ENCODE measurements at regions of chr16 and their contacts with region 1.

Region 1: GRCh38 chr16:83344014-83344413 is 463.8 kb upstream of the HSBP1 start:
- DNase-seq: no peak
- H3K4me3 ChIP-seq: no peak overlapping the region; a peak in 1 of 4 replicates
- H3K27ac ChIP-seq: peak overlapping the region; percentile 22 to 93; a peak in 3 of 4 replicates
- H3K4me1 ChIP-seq: no peaks in the 10 kb centered on the region; a peak in 1 of 4 replicates
- H3K27me3 ChIP-seq: no peaks in the 10 kb centered on the region
- CTCF ChIP-seq: no peak
- EP300 ChIP-seq: peak in 1 of 2 experiments; percentile 61; a peak in 1 of 4 replicates
- RAD21 ChIP-seq: no peak

Region 2: DNA sequence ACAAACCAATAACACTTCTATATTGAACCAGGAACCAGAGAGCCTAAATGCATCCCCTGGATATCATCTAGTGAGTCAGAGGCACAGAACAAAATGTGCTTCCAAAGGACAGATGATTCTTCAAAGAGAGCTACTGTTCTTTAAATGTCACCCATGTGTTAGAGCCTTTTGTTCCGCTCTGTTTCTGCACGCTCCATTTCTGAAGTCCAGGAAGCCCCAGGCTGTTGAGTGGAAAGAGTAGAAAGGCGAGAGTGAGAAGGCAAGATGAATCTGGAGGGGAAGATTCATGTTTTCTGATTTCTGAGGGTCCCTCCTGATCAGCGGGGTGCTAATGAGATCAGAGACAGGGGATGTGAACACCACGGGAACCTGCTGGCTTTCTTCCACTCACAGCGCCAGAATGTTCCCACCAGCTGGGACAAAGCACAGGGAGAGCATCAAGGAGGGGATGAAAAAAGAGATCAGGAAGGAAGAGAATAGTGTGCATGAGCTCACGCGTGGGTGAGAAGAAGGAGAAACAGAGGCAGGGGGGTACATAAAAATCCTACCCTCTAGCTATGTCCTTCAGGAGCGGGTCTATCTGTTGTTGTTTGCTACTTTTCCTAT is 96.1 kb before region 1 on chr16:
- CTCF ChIA-PET with region 1: no interaction called
- POLR2A ChIA-PET with region 1: no interaction called
- DNase-seq: no peak
- H3K4me3 ChIP-seq: no peak overlapping the region
- H3K27ac ChIP-seq: no peak overlapping the region
- H3K4me1 ChIP-seq: no peaks in the 10 kb centered on the region
- H3K27me3 ChIP-seq: no peaks in the 10 kb centered on the region
- CTCF ChIP-seq: no peak
- EP300 ChIP-seq: no peak
- RAD21 ChIP-seq: no peak

Region 3: GRCh38 chr16:83356266-83356665 is 12.3 kb after region 1 on chr16:
- CTCF ChIA-PET with region 1: interaction called, 10 read pairs
- POLR2A ChIA-PET with region 1: no interaction called
- DNase-seq: peak; percentile 43
- H3K4me3 ChIP-seq: no peak overlapping the region
- H3K27ac ChIP-seq: peak overlapping the region in 1 of 2 experiments; percentile 1; a peak in 1 of 4 replicates
- H3K4me1 ChIP-seq: no peaks in the 10 kb centered on the region
- H3K27me3 ChIP-seq: no peaks in the 10 kb centered on the region
- CTCF ChIP-seq: peak; percentile 72
- EP300 ChIP-seq: no peak
- RAD21 ChIP-seq: peak; percentile 66

Region 4: DNA sequence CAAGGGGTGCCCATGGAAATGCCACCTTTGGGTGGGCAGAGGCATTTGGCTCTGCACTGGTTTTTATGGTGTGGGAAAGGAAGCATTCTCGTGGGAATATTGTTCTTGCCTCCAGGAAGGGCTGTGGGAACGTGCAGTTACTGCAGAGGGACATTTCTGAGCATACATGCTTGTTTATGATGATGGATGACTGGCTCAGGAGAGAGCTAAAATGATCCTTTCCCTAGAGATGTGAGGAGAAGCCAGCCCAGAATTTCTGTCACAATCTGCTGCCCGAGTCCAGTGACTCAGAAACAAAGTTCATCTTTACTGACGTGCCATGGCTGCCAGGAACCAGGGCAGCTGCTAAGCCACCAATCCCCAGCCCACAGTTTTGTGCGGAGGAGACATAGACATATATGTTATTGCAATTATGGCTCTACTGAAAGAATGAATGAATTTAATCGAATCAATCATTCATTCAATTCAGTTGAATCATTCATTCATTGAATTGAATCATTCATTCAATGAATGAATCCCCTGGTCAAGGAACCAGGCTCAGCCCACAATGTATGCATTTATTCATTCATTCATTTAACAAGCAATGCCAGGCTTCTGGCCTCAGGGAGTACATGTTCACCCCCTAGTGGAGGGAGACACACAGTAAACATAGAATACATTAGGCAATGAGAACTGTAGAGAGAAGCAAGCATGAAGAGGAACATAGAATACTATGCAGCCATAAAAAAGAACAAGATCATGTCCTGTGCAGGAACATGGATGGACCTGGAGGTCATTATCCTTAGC is 49.4 kb after region 1 on chr16:
- CTCF ChIA-PET with region 1: no interaction called
- POLR2A ChIA-PET with region 1: no interaction called
- DNase-seq: no peak
- H3K4me3 ChIP-seq: no peak overlapping the region
- H3K27ac ChIP-seq: peak overlapping the region in 1 of 2 experiments; percentile 86; a peak in 2 of 4 replicates
- H3K4me1 ChIP-seq: no peaks in the 10 kb centered on the region; a peak in 2 of 4 replicates
- H3K27me3 ChIP-seq: no peaks in the 10 kb centered on the region
- CTCF ChIP-seq: peak; percentile 50
- EP300 ChIP-seq: no peak
- RAD21 ChIP-seq: 0 out of 2 replicates have a peak, but pooled peaks have one; percentile 21

Measured in SK-N-SH (cell line).